Activated CD4-positive, alpha-beta T cell treated with anti-CD3 and anti-CD28 coated beads for 36 hours (primary cell): ENCODE measurements at regions of chr10 and their contacts with region 1.

Region 1: DNA sequence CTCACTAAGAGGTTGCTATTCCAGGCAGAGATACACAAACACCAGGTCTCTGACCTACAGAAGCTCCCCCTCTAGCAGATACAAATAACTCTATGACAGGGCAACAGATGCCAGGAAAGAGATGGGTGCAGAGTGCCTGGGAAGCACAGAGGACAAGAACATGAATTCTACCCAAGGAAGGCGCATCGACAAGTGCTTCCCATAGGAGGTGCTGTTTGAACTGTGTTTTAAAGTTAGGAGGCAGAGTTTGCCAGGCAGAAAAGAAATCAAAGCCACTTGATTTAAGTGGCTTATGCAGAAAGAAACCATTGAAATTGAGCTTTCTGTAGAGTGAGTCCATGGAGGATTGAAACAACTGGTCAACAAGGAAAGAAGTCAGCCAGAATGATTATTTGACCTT is 35.3 kb upstream of the EGR2 start:
- DNase-seq: peak; percentile 51
- ATAC-seq: no peak
- H3K4me3 Mint-ChIP-seq: no peak overlapping the region
- H3K27ac Mint-ChIP-seq: no peak overlapping the region
- H3K4me1 Mint-ChIP-seq: peaks cover 47% of the 10 kb centered on the region
- H3K27me3 Mint-ChIP-seq: peaks cover 20% of the 10 kb centered on the region

Region 2: DNA sequence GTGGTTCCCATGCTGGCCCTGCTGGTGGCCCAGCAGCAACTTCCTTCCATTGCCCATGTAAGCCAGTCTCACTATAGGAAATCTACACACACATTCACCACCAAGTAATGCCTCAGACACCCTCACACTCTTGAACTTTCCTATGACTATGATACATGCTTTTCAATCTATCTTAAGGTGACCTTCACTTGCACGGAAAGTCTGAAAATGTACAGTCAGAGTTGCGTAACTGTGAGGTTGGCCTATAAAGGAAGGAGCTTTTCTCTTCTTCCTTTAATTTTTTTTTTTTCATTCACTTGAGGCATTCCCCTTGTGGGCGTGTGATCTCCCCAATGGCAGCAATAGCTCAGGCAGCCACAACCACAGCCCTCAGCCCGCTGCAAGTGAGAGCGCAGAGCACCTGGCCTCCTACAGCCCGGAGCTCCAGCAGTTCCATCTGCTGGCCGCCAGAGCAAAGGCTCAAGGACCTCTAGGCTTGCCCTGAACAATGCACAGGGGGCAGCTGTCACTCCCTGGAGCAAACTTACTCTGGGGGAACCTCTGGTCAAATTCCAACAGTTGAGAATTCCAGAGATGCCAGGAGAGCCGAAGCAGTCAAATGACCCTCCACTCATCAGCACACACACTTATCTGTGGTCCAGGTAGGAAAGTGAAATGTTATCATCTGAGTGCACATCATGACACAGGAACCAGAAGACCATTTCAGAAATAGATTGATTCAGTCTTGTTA is 170.1 kb before region 1 on chr10:
- CTCF ChIA-PET with region 1: interaction called, 3 read pairs
- POLR2A ChIA-PET with region 1: no interaction called
- intact Hi-C with region 1: loop called (anchors 1 to 2 kb)
- DNase-seq: peak; percentile 94
- ATAC-seq: peak; percentile 94
- H3K4me3 Mint-ChIP-seq: peak overlapping the region; percentile 11
- H3K27ac Mint-ChIP-seq: peak overlapping the region; percentile 86
- H3K4me1 Mint-ChIP-seq: peaks cover 34% of the 10 kb centered on the region
- H3K27me3 Mint-ChIP-seq: peaks cover 7% of the 10 kb centered on the region

Region 3: GRCh38 chr10:62870866-62871265 is 19.4 kb after region 1 on chr10:
- CTCF ChIA-PET with region 1: interaction called, 6 read pairs
- POLR2A ChIA-PET with region 1: no interaction called
- intact Hi-C with region 1: loop called (anchors 2 kb)
- DNase-seq: peak; percentile 59
- ATAC-seq: peak; percentile 80
- H3K4me3 Mint-ChIP-seq: no peak overlapping the region
- H3K27ac Mint-ChIP-seq: peak overlapping the region; percentile 57
- H3K4me1 Mint-ChIP-seq: peaks cover 25% of the 10 kb centered on the region
- H3K27me3 Mint-ChIP-seq: peaks cover 12% of the 10 kb centered on the region

Region 4: DNA sequence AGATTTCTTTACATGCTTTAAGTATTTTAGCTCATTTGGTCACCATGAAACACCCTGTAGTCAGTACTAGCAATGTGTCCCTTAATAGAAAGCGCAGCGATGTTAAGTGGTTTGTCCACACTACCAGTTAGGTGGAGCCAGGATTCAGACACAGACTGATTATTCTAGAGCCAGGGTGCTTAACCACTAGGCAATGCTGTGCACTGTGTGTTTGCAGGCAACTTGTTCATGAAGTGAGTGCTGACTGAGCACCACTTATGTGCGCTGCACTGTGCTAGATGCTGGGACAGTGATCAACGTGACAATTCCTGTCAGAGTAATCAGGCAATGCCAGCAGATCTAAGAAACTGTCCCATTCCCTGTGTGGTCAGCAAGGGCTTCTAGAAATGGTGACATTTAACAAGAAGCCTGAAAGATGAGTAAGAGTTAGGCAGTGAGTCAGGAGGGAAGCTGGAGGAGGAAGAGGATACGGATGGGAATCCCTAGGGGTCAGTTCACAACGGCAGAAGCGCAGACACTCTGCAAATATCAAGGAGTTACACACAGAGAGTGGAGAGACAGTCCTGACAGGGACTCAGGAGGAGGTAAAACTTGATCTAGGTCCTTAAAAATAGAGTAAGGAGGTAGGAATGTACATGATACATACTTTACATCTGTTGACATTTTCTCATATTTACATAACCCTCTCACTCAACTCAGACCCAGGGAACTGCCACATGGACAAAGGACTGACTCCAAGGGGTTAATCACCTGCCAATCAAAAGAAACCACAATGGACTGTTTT is 34.4 kb after region 1 on chr10:
- CTCF ChIA-PET with region 1: no interaction called
- POLR2A ChIA-PET with region 1: no interaction called
- intact Hi-C with region 1: no loop called
- DNase-seq: no peak
- ATAC-seq: no peak
- H3K4me3 Mint-ChIP-seq: no peak overlapping the region
- H3K27ac Mint-ChIP-seq: no peak overlapping the region
- H3K4me1 Mint-ChIP-seq: no peaks in the 10 kb centered on the region
- H3K27me3 Mint-ChIP-seq: peaks cover 48% of the 10 kb centered on the region

Region 5: DNA sequence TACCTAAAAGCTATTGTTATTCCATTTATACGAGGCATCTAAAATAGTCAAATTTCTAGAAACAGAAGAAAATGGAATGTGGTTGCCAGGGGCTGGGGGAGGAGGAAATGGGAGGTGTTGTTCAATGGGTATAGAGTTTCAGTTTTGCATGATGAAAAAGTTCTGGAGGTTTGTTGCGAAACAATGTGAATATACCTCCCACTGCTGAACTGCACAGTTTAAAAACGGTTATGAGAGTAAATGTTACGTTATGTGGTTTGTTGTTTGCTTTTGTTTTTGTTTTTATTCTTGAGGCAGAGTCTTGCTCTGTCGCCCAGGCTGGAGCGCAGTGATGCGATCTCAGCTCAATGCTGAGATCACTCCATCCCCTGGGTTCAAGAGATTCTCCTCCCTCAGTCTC is 216.8 kb after region 1 on chr10:
- CTCF ChIA-PET with region 1: interaction called, 3 read pairs
- POLR2A ChIA-PET with region 1: no interaction called
- intact Hi-C with region 1: loop called in 1 of 2 experiments (anchors 5 kb)
- DNase-seq: peak; percentile 36
- ATAC-seq: peak; percentile 87
- H3K4me3 Mint-ChIP-seq: no peak overlapping the region
- H3K27ac Mint-ChIP-seq: no peak overlapping the region
- H3K4me1 Mint-ChIP-seq: peaks cover 22% of the 10 kb centered on the region
- H3K27me3 Mint-ChIP-seq: peaks cover 50% of the 10 kb centered on the region

Region 6: DNA sequence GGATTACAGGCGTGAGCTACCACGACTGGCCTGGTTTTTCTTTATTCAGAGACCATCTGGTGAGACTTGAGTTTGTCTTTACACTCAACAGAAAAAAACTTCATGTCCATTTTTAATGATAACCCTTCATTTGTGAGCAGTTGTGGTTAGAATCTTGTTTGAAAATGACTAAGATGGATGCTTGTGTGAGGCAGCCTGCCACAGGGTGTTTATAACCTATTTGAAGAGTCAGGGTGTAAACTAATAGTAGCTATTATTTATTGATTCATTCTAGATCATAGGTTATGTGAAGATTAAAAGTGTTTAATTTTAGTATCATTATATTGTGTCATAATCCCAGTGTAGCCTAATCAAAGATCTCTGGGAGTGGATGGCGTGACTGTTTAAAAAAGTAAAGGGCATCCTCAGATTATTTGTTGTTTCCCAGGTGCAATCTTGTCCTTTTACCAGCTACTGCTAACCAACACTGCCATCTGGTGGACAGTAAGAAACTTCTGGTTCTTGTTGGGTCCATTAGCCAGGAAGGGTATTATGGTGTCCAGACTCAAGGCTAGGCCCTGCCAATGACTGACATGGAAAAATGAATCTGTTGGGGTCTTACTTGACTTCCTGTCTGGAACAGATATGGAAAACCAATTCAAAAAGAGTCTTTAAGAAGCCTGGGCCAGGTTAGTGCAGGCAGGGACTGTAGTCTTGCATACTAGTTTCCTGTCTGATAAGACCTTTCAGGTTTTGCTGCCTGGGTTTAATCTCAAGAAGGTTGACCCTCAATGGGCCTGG is 306.6 kb after region 1 on chr10:
- CTCF ChIA-PET with region 1: interaction called, 5 read pairs
- POLR2A ChIA-PET with region 1: no interaction called
- intact Hi-C with region 1: loop called (anchors 1 to 10 kb)
- DNase-seq: peak; percentile 61
- ATAC-seq: peak; percentile 61
- H3K4me3 Mint-ChIP-seq: no peak overlapping the region
- H3K27ac Mint-ChIP-seq: no peak overlapping the region
- H3K4me1 Mint-ChIP-seq: peaks cover 6% of the 10 kb centered on the region
- H3K27me3 Mint-ChIP-seq: no peaks in the 10 kb centered on the region